Lower lobe of right lung (tissue), 2 donors: ENCODE measurements at regions of chr19 and their contacts with region 1.

Region 1: DNA sequence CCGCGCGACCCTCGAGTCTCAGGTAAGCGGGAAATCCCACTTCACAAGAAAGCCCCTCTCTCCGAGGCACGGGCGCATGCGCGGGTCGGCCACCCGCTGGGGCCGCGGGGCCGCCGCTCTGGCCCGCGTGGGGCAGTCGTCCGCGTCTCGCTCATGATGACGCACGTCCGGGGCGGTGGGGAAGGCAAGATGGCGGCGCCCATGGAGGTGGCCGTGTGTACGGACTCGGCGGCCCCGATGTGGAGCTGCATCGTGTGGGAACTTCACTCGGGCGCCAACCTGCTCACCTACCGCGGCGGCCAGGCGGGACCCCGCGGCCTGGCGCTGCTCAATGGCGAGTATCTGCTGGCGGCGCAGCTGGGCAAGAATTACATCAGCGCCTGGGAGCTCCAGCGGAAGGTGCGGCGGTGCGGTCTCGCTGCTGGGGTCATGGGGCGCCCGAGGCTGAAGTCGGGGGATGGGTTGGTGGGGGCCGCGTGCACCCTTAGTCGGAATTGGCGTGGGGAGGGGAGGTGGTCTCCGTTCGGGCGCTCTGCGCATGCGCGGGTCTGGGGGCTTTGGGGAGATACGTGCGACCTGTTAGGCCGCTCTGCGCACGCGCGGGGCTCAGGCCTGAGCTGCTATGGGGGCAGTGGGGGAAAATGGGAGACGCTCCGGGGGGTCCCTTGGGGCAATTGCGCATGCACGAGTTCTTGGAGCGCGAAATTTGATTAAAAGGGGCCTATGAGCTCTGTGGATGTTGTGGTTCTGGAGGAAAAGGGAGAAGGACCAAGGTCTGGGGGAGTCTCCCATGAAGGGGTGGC is at the start of gene WDR18:
- DNase-seq: peak; percentile 96
- ATAC-seq: peak; percentile 93 to 97
- H3K4me3 ChIP-seq: peak within 1 kb of the TSS; percentile 91
- H3K27ac ChIP-seq: peak within 1 kb of the TSS; percentile 91
- H3K4me1 ChIP-seq: peaks cover 33% of the 10 kb centered on the region
- H3K27me3 ChIP-seq: no peaks in the 10 kb centered on the region
- CTCF ChIP-seq: peak; percentile 49
- total RNA-seq, gene WDR18: 29.2 TPM

Region 2: GRCh38 chr19:771332-771785 is 213.0 kb before region 1 on chr19:
- intact Hi-C with region 1: loop called (anchors 10 kb)
- DNase-seq: no peak
- ATAC-seq: peak; percentile 44 to 68
- H3K4me3 ChIP-seq: no peak overlapping the region
- H3K27ac ChIP-seq: no peak overlapping the region
- H3K4me1 ChIP-seq: no peaks in the 10 kb centered on the region
- H3K27me3 ChIP-seq: no peaks in the 10 kb centered on the region
- CTCF ChIP-seq: peak; percentile 59

Region 3: GRCh38 chr19:912271-913079 is 71.9 kb before region 1 on chr19:
- intact Hi-C with region 1: no loop called
- DNase-seq: no peak
- ATAC-seq: no peak
- H3K4me3 ChIP-seq: peak overlapping the region; percentile 79
- H3K27ac ChIP-seq: peak overlapping the region; percentile 96
- H3K4me1 ChIP-seq: peaks cover 42% of the 10 kb centered on the region
- H3K27me3 ChIP-seq: peaks cover 19% of the 10 kb centered on the region
- CTCF ChIP-seq: no peak

Region 4: DNA sequence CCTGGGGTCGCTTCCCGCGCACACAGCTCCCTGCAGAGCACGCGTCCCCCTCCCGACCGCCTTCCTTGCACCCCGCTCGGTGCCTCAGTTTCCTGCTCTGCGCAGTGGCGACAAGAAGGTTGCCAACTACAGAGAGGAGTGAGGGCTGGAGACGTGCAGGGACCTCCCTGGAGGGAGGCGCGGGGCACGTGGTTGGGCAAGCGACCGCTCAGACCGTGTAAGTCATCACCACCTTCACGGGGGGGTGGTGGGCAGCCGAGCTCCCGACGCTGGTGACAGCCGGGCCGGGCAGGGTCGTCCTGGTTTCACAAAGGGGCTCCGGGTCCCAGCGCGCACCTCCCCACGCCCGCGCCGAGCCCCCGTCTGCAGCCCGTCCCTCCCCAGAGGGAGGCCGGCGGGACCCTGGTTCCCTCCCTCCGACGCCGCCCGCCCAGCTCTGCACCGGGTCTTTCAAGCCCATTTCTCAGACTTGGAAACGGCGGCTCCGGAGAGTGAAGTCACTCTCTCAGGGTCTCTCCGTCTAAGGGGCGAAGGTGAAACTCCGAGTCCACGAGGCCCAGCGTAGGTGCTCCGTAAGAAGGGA is 59.3 kb before region 1 on chr19:
- intact Hi-C with region 1: loop called (anchors 5 kb)
- DNase-seq: no peak
- ATAC-seq: peak; percentile 47 to 72
- H3K4me3 ChIP-seq: peak overlapping the region; percentile 76
- H3K27ac ChIP-seq: peak overlapping the region; percentile 87
- H3K4me1 ChIP-seq: peaks cover 35% of the 10 kb centered on the region
- H3K27me3 ChIP-seq: peaks cover 15% of the 10 kb centered on the region
- CTCF ChIP-seq: no peak

Region 5: GRCh38 chr19:940591-941291 is 43.6 kb before region 1 on chr19:
- intact Hi-C with region 1: no loop called
- DNase-seq: peak; percentile 89
- ATAC-seq: peak; percentile 92
- H3K4me3 ChIP-seq: peak overlapping the region; percentile 51
- H3K27ac ChIP-seq: peak overlapping the region; percentile 81
- H3K4me1 ChIP-seq: peaks cover 29% of the 10 kb centered on the region
- H3K27me3 ChIP-seq: no peaks in the 10 kb centered on the region
- CTCF ChIP-seq: peak; percentile 25

Region 6: DNA sequence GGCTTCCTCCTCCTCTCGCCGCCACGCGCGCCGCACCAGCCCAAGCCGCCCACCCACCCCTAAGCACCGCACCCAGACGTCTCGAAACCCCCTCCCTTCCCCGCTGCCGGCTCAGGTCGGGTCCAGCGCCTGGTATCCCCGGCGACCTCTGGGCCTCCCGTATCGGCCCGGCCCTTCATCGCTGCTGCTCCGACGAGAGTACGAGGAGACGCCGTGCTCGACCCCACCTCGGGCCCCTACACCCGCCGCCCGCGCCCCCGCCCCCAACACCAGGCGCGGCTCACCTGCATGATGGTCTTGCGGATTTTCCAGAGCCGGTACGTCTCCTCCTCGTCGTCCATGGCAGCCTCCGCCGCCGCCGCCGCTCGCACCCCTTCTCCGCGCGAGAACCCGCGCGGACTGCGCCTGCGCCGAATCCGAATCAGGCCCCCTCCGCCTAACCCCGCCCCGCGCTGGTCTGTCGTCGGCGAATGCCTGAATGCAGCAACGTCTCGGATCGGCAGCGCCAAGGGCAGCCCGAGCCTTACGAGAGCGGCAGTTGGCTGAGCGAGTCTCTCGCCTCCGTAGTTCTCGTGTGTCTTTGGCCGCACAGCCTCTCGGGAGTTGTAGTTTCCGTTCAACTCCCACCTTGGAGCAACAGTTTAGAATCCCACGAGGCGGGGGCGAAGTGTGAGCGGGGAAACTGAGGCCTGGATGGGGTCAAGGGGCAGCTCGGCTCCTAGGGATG is 110.8 kb after region 1 on chr19 and contains the start of gene POLR2E:
- intact Hi-C with region 1: no loop called
- DNase-seq: peak; percentile 99
- ATAC-seq: peak; percentile 85 to 94
- H3K4me3 ChIP-seq: peak within 1 kb of the TSS; percentile 74
- H3K27ac ChIP-seq: peak within 1 kb of the TSS; percentile 79
- H3K4me1 ChIP-seq: peaks cover 46% of the 10 kb centered on the region
- H3K27me3 ChIP-seq: no peaks in the 10 kb centered on the region
- CTCF ChIP-seq: no peak
- total RNA-seq, gene POLR2E: 158 TPM